GM10248 (cell line): ENCODE measurements at regions of chr5 and their contacts with region 1.

Region 1: GRCh38 chr5:143213851-143214363 is 189.6 kb downstream of the NR3C1 start:
- DNase-seq: peak; percentile 79
- CTCF ChIP-seq: no peak

Region 2: GRCh38 chr5:143200781-143201398 is 13.0 kb before region 1 on chr5:
- CTCF ChIA-PET with region 1: interaction called, 45 read pairs
- POLR2A ChIA-PET with region 1: no interaction called
- DNase-seq: no peak
- CTCF ChIP-seq: no peak

Region 3: DNA sequence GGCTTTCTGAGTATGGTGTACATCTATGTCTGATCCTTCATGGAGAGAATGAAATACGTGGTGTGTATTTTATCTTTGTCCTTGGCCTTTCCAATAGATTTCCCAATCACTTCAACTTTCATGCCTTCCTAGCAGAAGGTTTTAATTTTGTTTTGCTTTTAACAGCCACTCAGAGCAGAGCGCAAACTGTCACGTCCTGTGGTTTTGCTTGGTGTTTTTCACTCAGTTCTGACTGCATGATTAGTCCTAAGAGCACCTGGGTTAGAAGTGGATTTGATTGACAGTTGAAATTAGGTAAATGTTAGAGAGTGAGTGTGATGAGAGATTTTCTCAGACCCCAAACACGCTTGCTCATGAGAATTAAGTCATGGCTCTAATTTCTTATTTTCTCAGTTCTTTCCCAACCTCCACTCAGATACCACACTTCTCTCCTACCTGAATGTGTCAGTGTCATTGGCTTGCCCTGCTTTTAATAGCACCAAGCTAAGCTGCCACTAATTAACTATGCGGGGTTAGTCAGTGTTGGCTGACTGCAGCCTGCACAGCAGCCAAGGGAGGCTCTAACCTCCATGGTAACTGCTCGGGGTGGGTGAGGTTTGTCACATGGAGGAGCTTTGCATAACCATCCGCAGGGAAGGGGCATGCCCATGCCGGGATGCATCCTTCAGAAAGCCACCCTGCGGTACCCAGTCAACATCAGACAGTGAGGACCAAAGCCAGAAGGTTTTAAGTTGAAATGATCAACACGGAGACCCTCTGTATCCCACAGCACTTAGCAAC is 16.2 kb after region 1 on chr5:
- CTCF ChIA-PET with region 1: interaction called, 17 read pairs
- POLR2A ChIA-PET with region 1: no interaction called
- DNase-seq: peak; percentile 82
- CTCF ChIP-seq: no peak